Naive thymus-derived CD4-positive, alpha-beta T cell (primary cell): ENCODE measurements at regions of chr3 and their contacts with region 1.

Region 1: DNA sequence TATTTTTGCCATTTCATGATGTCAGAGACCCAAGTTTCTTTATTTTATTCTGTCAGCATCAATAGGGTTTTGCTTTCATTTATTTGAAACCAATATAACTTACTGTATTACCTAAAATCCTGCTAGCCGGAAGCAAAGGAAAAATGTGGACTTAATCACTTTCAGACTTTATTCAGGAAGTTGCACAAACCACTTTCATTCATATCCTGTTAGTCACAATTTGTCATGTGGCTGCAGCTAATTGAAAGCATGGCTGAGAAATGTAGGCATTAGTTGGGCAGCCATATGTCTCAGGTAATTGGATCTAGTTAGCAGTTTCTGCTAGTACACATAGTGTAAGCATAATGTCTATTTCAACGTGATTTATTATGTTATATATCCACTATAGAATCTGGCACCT is 462.3 kb upstream of the SGO1 start:
- DNase-seq: no peak
- ATAC-seq: no peak
- H3K4me3 ChIP-seq: no peak overlapping the region
- H3K4me3 Mint-ChIP-seq: no peak overlapping the region
- H3K27ac ChIP-seq: no peak overlapping the region
- H3K27ac Mint-ChIP-seq: no peak overlapping the region
- H3K4me1 ChIP-seq: no peaks in the 10 kb centered on the region
- H3K4me1 Mint-ChIP-seq: no peaks in the 10 kb centered on the region
- H3K27me3 ChIP-seq: no peaks in the 10 kb centered on the region
- H3K27me3 Mint-ChIP-seq: no peaks in the 10 kb centered on the region

Region 2: DNA sequence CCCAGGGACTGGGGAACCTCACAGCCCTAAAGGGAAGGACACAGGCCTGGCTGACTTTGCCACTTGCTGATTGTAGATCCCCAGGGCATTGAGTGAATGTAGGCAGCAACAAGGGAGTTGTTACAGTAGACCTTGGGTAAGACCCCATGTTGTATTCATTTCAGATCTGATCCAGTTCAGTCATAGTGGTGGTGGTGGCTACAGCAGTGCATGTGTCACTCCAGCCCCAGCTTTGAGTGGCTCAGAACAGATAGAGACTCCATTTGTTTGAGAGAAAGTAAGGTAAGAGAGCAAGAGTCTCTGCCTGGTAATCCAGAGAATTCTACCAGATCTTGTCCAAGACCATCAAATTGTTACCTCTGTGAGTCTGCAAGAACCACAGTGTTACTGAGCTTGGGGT is 1944.5 kb before region 1 on chr3:
- CTCF ChIA-PET with region 1: no interaction called
- POLR2A ChIA-PET with region 1: no interaction called
- intact Hi-C with region 1: no loop called
- DNase-seq: no peak
- ATAC-seq: no peak
- H3K4me3 ChIP-seq: no peak overlapping the region
- H3K4me3 Mint-ChIP-seq: no peak overlapping the region
- H3K27ac ChIP-seq: no peak overlapping the region
- H3K27ac Mint-ChIP-seq: peak overlapping the region in 1 of 9 donors; percentile 14
- H3K4me1 ChIP-seq: no peaks in the 10 kb centered on the region
- H3K4me1 Mint-ChIP-seq: peaks cover 6 to 19% (median 10%) of the 10 kb centered on the region in 7 donors
- H3K27me3 ChIP-seq: no peaks in the 10 kb centered on the region
- H3K27me3 Mint-ChIP-seq: no peaks in the 10 kb centered on the region

Region 3: GRCh38 chr3:20683910-20684309 is 35.6 kb after region 1 on chr3:
- CTCF ChIA-PET with region 1: no interaction called
- POLR2A ChIA-PET with region 1: no interaction called
- intact Hi-C with region 1: loop called in 1 of 2 experiments (anchors 2 kb)
- DNase-seq: no peak
- ATAC-seq: no peak
- H3K4me3 ChIP-seq: no peak overlapping the region
- H3K4me3 Mint-ChIP-seq: no peak overlapping the region
- H3K27ac ChIP-seq: no peak overlapping the region
- H3K27ac Mint-ChIP-seq: no peak overlapping the region
- H3K4me1 ChIP-seq: no peaks in the 10 kb centered on the region
- H3K4me1 Mint-ChIP-seq: no peaks in the 10 kb centered on the region
- H3K27me3 ChIP-seq: no peaks in the 10 kb centered on the region
- H3K27me3 Mint-ChIP-seq: no peaks in the 10 kb centered on the region